Left lung (tissue), 14 donors: ENCODE measurements at regions of chr16 and their contacts with region 1.

Region 1: DNA sequence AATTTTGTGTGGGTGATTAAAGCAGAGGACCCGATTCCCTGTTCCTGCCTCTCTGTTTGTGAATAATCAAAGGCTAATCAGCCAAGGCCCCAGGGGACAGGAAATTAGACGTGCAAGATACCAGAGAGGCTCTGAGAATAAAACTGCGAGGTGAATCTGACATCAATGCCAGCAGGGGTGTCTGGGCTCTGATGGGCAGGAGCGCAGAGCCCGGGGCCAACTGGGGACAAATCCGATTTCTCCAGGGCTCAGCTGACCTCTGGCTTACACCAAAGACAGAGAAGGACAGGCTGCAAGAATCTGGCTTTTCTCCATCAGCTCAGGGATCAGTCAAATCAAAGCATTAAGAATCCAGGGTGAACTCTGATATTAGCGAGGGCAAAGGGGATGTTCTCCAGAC is 174.3 kb downstream of the XYLT1 start:
- DNase-seq: no peak
- ATAC-seq: no peak
- H3K4me3 ChIP-seq: no peak overlapping the region
- H3K27ac ChIP-seq: no peak overlapping the region
- H3K4me1 ChIP-seq: peaks cover 0 to 13% of the 10 kb centered on the region in 2 donors
- H3K27me3 ChIP-seq: no peaks in the 10 kb centered on the region
- CTCF ChIP-seq: no peak

Region 2: GRCh38 chr16:17224879-17225281 is 71.6 kb before region 1 on chr16:
- intact Hi-C with region 1: loop called in 1 of 2 experiments (anchors 10 kb)
- DNase-seq: peak in 2 of 4 donors; percentile 39 to 51
- ATAC-seq: peak; percentile 55
- H3K4me3 ChIP-seq: no peak overlapping the region
- H3K27ac ChIP-seq: no peak overlapping the region
- H3K4me1 ChIP-seq: peaks cover 4 to 24% of the 10 kb centered on the region in 2 donors
- H3K27me3 ChIP-seq: no peaks in the 10 kb centered on the region
- CTCF ChIP-seq: no peak

Region 3: GRCh38 chr16:17617021-17617552 is 320.7 kb after region 1 on chr16:
- intact Hi-C with region 1: no loop called
- DNase-seq: no peak
- ATAC-seq: no peak
- H3K4me3 ChIP-seq: no peak overlapping the region
- H3K27ac ChIP-seq: no peak overlapping the region
- H3K4me1 ChIP-seq: no peaks in the 10 kb centered on the region
- H3K27me3 ChIP-seq: peaks cover 0 to 6% of the 10 kb centered on the region in 2 donors
- CTCF ChIP-seq: no peak